OCI-LY7 (cell line): ENCODE measurements at regions of chr14 and their contacts with region 1.

Region 1: GRCh38 chr14:105351920-105352851 is 37.6 kb downstream of the PACS2 start:
- DNase-seq: peak; percentile 87
- H3K4me3 ChIP-seq: no peak overlapping the region
- H3K27ac ChIP-seq: no peak overlapping the region
- H3K4me1 ChIP-seq: no peaks in the 10 kb centered on the region
- CTCF ChIP-seq: peak; percentile 85

Region 2: GRCh38 chr14:105203057-105203531 is 149.1 kb before region 1 on chr14:
- CTCF ChIA-PET with region 1: no interaction called
- POLR2A ChIA-PET with region 1: no interaction called
- intact Hi-C with region 1: loop called (anchors 1 kb)
- DNase-seq: peak; percentile 60
- H3K4me3 ChIP-seq: no peak overlapping the region
- H3K27ac ChIP-seq: no peak overlapping the region
- H3K4me1 ChIP-seq: no peaks in the 10 kb centered on the region
- CTCF ChIP-seq: peak; percentile 93

Region 3: DNA sequence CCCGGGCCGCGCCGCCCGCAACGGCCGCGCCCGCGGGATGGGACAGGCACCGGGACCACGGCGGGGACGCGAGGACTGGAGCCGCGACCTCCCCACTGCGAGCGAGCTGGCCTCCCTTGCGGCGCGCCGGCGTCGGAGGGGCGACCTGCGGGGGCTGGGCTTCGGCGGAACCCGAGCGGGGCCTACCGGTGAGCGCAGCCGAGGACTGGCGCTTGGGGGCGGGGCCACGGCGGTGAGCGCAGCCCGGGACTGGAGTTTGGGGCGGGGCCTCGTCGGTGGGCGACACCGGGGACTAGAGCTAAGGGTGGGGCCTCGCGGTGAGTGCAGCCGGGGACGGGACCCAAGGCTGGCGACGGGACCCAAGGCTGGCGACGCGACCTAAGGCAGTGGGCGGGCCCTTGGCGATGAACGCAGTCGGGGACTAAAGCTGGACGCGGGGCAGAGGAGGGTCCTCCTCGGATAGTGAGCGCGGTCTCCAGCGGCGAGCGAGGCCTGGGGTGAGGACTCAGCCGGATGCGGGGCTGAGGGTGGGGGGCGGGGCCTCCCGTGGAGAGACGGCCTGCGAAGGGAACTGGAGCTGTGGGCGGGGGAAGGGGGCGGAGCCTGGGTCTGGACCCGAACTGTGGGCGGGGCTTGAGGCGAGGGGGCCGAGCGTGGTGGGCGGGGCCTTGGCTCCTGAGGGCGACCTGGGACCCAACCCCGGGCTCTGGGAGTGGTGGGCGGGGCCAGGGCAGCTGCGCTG is 51.2 kb before region 1 on chr14 and contains the start of gene BRF1:
- CTCF ChIA-PET with region 1: no interaction called
- POLR2A ChIA-PET with region 1: no interaction called
- intact Hi-C with region 1: loop called (anchors 5 kb)
- DNase-seq: peak; percentile 97
- H3K4me3 ChIP-seq: peak within 1 kb of the TSS; percentile 70
- H3K27ac ChIP-seq: peak within 1 kb of the TSS; percentile 73
- H3K4me1 ChIP-seq: peaks cover 14% of the 10 kb centered on the region
- CTCF ChIP-seq: no peak
- total RNA-seq, gene BRF1: 23.7 and 25.5 TPM in 2 replicates